Naive thymus-derived CD4-positive, alpha-beta T cell (primary cell): ENCODE measurements at regions of chr5 and their contacts with region 1.

Region 1: DNA sequence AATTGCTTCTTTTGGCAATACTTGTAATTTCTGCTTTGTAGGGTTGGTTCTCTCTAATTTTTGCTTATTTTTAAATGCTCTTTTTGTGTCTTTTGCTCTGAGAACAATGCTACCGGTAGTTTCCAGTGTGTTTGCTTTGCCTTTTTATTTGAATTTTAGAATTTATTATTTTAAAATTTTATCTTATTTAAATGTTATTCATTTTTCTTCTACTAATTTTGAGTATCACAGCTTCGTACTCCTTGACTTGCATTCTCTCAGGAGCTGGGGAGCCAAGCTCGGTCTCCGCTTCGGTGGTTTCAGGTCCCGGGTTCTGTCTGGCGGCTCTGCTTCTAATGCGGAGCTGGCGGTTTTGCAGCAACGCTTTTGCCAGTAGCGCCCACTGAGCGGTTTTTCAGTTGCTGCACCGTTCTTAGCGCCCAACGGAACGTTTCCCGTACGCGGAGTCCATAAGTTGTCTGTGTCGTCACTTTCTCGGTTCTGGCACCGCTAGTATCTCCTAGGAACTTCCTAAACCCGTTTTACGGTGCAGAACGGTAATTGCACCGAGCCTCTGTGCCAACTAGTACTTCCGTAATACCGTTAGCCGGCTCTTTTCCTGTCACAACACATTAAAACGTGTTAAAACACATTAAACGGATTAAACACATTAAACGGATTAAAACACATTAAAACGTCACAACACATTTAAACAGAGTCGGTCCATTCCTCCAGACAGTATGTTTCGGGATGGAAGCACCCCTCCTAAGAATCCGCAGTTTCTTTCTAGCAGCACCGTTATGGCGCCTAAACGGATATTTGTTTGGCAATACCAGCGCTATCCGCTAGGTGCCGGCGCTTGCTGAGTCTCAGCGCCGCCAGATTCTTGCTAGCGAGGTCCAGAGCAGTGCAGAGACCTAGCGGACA is 45.6 kb downstream of the ANXA2R start:
- DNase-seq: peak; percentile 73 to 89 (median 85)
- ATAC-seq: peak; percentile 73
- H3K4me3 ChIP-seq: peak overlapping the region; percentile 84
- H3K4me3 Mint-ChIP-seq: peak overlapping the region; percentile 84 to 100 (median 98)
- H3K27ac ChIP-seq: peak overlapping the region; percentile 89
- H3K27ac Mint-ChIP-seq: peak overlapping the region; percentile 97 to 100 (median 100)
- H3K4me1 ChIP-seq: peaks cover 18 to 21% of the 10 kb centered on the region in 2 donors
- H3K4me1 Mint-ChIP-seq: peaks cover 16 to 49% (median 29%) of the 10 kb centered on the region in 7 donors
- H3K27me3 ChIP-seq: no peaks in the 10 kb centered on the region
- H3K27me3 Mint-ChIP-seq: peaks cover 0 to under 1% (median 0%) of the 10 kb centered on the region in 5 donors

Region 2: DNA sequence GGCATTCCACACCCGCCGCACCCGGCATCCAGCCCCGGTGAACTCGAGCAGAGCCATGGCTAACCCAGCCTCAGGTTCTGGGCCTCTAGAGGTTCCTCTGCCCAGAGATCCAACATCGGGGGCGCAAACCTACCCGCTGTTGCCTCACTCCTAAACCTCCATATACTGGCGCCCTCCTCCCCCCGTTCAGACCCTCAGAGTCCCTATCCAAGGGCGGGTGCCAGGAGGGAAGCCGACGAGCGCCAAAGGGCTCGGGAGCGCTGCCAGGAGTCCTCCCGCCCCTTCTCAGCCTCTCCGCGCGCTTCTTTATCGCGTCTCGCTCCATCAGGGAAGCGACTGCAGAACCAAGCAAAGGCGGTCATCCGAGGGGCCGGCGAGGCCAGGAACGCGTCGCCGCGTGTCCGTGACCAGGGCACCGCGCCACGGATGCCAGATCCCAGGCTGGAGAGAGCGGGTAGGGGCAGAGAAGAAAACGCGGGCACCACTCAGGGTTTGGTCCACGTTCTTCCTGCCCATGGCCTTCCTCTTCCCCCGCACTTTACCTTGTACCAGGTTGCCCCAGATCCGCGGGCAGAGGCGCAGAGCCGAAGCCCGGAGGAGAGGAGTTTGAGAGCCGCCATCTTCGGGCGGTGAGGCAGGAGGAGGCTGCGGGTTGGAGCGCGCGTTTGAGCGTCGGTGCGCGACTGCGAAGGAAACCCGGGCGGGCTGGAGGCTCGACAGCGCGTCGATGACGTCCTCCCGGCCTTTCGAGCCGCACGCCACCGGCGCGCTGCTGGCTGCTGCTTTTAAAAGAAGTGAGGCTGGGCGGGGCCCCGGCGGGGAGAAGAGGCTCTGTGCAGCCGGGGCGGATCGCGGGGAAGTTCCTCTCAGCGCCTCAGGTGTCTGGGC is 1124.5 kb before region 1 on chr5 and contains the start of gene OXCT1:
- CTCF ChIA-PET with region 1: no interaction called
- POLR2A ChIA-PET with region 1: no interaction called
- intact Hi-C with region 1: no loop called
- DNase-seq: peak; percentile 88 to 96 (median 95)
- ATAC-seq: peak; percentile 97
- H3K4me3 ChIP-seq: peak within 1 kb of the TSS; percentile 91
- H3K4me3 Mint-ChIP-seq: peak within 1 kb of the TSS; percentile 85 to 94 (median 90)
- H3K27ac ChIP-seq: peak within 1 kb of the TSS; percentile 97
- H3K27ac Mint-ChIP-seq: peak within 1 kb of the TSS; percentile 89 to 98 (median 97)
- H3K4me1 ChIP-seq: peaks cover 16% of the 10 kb centered on the region in 2 donors
- H3K4me1 Mint-ChIP-seq: peaks cover 18 to 63% (median 57%) of the 10 kb centered on the region in 7 donors
- H3K27me3 ChIP-seq: no peaks in the 10 kb centered on the region
- H3K27me3 Mint-ChIP-seq: no peaks in the 10 kb centered on the region
- total RNA-seq, gene OXCT1: 18.6 to 53.1 (median 30.0) TPM

Region 3: GRCh38 chr5:42321785-42322184 is 672.7 kb before region 1 on chr5:
- CTCF ChIA-PET with region 1: no interaction called
- POLR2A ChIA-PET with region 1: no interaction called
- intact Hi-C with region 1: no loop called
- DNase-seq: no peak
- ATAC-seq: no peak
- H3K4me3 ChIP-seq: no peak overlapping the region
- H3K4me3 Mint-ChIP-seq: no peak overlapping the region
- H3K27ac ChIP-seq: no peak overlapping the region
- H3K27ac Mint-ChIP-seq: no peak overlapping the region
- H3K4me1 ChIP-seq: no peaks in the 10 kb centered on the region
- H3K4me1 Mint-ChIP-seq: no peaks in the 10 kb centered on the region
- H3K27me3 ChIP-seq: no peaks in the 10 kb centered on the region
- H3K27me3 Mint-ChIP-seq: peaks cover 0 to 10% (median 0%) of the 10 kb centered on the region in 5 donors

Region 4: DNA sequence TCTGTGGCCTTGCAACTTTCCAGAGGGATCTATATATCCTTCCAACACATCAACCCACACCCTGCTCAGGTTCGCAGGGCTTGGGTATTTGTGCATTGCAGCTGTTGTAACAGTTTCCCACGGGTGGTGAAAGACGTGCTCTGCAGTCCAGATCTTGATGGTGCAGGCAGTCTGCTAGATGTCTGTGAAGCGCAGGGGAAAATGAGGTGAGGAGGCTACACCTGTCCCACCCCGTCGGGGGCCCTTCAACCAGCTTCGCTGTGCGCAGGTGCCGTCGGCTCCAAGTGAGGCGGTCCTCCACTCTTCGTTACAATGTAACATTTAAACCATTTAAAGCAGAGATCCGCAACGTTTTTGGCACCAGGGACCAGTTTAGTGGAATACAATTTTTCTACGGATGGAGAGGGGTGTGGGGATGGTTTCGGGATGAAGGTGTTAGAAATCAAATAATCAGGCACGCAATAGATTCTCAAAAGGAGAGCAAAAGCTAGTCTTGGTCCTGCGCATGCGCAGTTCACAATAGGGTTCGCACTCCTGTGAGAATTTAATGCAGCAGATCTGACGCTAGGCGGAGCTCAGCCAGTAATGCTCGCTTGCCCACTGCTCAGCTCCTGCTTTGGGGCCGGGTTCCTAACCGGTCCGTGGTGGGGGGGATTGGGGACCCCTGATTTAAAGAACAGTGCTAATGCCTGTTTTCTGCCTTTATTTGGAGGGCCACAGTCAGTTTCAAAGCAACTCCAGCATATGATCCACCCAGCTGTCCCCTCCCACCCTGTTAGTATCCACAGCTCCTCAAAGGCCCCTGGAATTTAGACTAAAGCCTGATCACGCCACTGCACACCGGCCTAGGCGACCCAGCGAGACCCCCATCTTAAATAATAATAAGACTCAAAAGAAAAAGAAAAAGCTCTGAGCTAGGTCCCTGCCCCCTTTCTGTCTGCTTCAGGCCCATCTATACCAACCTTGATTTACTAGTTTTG is 85.7 kb before region 1 on chr5:
- CTCF ChIA-PET with region 1: interaction called, 16 read pairs
- POLR2A ChIA-PET with region 1: interaction called, 184 read pairs
- intact Hi-C with region 1: loop called (anchors 1 kb)
- DNase-seq: peak; percentile 76 to 93 (median 88)
- ATAC-seq: peak; percentile 92
- H3K4me3 ChIP-seq: peak overlapping the region; percentile 72
- H3K4me3 Mint-ChIP-seq: peak overlapping the region; percentile 89 to 98 (median 94)
- H3K27ac ChIP-seq: peak overlapping the region; percentile 76
- H3K27ac Mint-ChIP-seq: peak overlapping the region; percentile 64 to 97 (median 95)
- H3K4me1 ChIP-seq: peaks cover 0 to 4% of the 10 kb centered on the region in 2 donors
- H3K4me1 Mint-ChIP-seq: peaks cover 5 to 22% (median 19%) of the 10 kb centered on the region in 7 donors
- H3K27me3 ChIP-seq: no peaks in the 10 kb centered on the region
- H3K27me3 Mint-ChIP-seq: peaks cover 0 to 43% (median 0%) of the 10 kb centered on the region in 5 donors

Region 5: GRCh38 chr5:42982107-42982622 is 12.3 kb before region 1 on chr5:
- CTCF ChIA-PET with region 1: interaction called, 4 read pairs
- POLR2A ChIA-PET with region 1: interaction called, 19 read pairs
- intact Hi-C with region 1: loop called in 1 of 2 experiments (anchors 1 kb)
- DNase-seq: no peak
- ATAC-seq: no peak
- H3K4me3 ChIP-seq: no peak overlapping the region
- H3K4me3 Mint-ChIP-seq: no peak overlapping the region
- H3K27ac ChIP-seq: no peak overlapping the region
- H3K27ac Mint-ChIP-seq: no peak overlapping the region
- H3K4me1 ChIP-seq: peaks cover 2 to 13% of the 10 kb centered on the region in 2 donors
- H3K4me1 Mint-ChIP-seq: peaks cover 11 to 43% (median 36%) of the 10 kb centered on the region in 7 donors
- H3K27me3 ChIP-seq: no peaks in the 10 kb centered on the region
- H3K27me3 Mint-ChIP-seq: no peaks in the 10 kb centered on the region

Region 6: DNA sequence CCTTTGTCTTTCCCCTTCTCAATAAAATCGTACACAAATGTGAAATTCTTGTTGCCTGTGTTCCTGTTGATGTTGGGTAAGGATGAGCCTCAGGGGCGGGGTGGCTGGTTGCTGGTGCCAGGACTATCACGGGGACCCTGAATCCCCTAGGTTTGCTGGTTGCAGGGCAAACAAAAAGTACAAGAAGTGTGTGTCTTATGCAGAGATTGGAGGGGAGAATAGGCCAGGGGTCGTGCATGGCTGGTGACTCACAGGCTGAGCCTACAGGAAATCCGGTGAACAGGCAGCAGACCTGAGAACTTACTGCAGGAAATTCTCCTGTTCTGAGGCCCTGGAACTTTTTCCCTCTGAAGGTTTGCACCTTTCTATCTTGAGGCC is 40.1 kb after region 1 on chr5:
- CTCF ChIA-PET with region 1: interaction called, 23 read pairs
- POLR2A ChIA-PET with region 1: interaction called, 723 read pairs
- intact Hi-C with region 1: no loop called
- DNase-seq: peak in 1 of 9 donors; percentile 30
- ATAC-seq: no peak
- H3K4me3 ChIP-seq: no peak overlapping the region
- H3K4me3 Mint-ChIP-seq: peak overlapping the region in 8 of 10 donors; percentile 5 to 59 (median 20)
- H3K27ac ChIP-seq: no peak overlapping the region
- H3K27ac Mint-ChIP-seq: peak overlapping the region in 8 of 9 donors; percentile 8 to 100 (median 49)
- H3K4me1 ChIP-seq: peaks cover 16 to 17% of the 10 kb centered on the region in 2 donors
- H3K4me1 Mint-ChIP-seq: peaks cover 18 to 69% (median 59%) of the 10 kb centered on the region in 7 donors
- H3K27me3 ChIP-seq: no peaks in the 10 kb centered on the region
- H3K27me3 Mint-ChIP-seq: no peaks in the 10 kb centered on the region

Region 7: GRCh38 chr5:43066799-43067741 is 72.6 kb after region 1 on chr5:
- CTCF ChIA-PET with region 1: interaction called, 28 read pairs
- POLR2A ChIA-PET with region 1: interaction called, 345 read pairs
- intact Hi-C with region 1: loop called (anchors 1 kb)
- DNase-seq: peak; percentile 80 to 96 (median 89)
- ATAC-seq: peak; percentile 69
- H3K4me3 ChIP-seq: peak overlapping the region; percentile 82
- H3K4me3 Mint-ChIP-seq: peak overlapping the region; percentile 93 to 100 (median 98)
- H3K27ac ChIP-seq: peak overlapping the region; percentile 90
- H3K27ac Mint-ChIP-seq: peak overlapping the region; percentile 99 to 100 (median 99)
- H3K4me1 ChIP-seq: peaks cover 25 to 33% of the 10 kb centered on the region in 2 donors
- H3K4me1 Mint-ChIP-seq: peaks cover 26 to 67% (median 44%) of the 10 kb centered on the region in 7 donors
- H3K27me3 ChIP-seq: no peaks in the 10 kb centered on the region
- H3K27me3 Mint-ChIP-seq: no peaks in the 10 kb centered on the region

Region 8: GRCh38 chr5:43191740-43192557 is 197.4 kb after region 1 on chr5 and contains the start of gene NIM1K:
- CTCF ChIA-PET with region 1: no interaction called
- POLR2A ChIA-PET with region 1: no interaction called
- intact Hi-C with region 1: loop called in 1 of 2 experiments (anchors 1 kb)
- DNase-seq: peak in 8 of 9 donors; percentile 7 to 55 (median 16)
- ATAC-seq: peak; percentile 51
- H3K4me3 ChIP-seq: peak within 1 kb of the TSS; percentile 63
- H3K4me3 Mint-ChIP-seq: peak within 1 kb of the TSS; percentile 81 to 94 (median 88)
- H3K27ac ChIP-seq: no peak within 1 kb of the TSS
- H3K27ac Mint-ChIP-seq: peak within 1 kb of the TSS in 6 of 9 donors; percentile 21 to 86 (median 71)
- H3K4me1 ChIP-seq: peaks cover 4 to 18% of the 10 kb centered on the region in 2 donors
- H3K4me1 Mint-ChIP-seq: peaks cover 11 to 33% (median 23%) of the 10 kb centered on the region in 7 donors
- H3K27me3 ChIP-seq: peaks cover 0 to 5% of the 10 kb centered on the region in 2 donors
- H3K27me3 Mint-ChIP-seq: peaks cover 15 to 22% (median 19%) of the 10 kb centered on the region in 5 donors
- total RNA-seq, gene NIM1K: 0.40 to 0.97 (median 0.61) TPM

Region 9: GRCh38 chr5:43602461-43603343 is 608.2 kb after region 1 on chr5 and contains the start of gene NNT:
- CTCF ChIA-PET with region 1: no interaction called
- POLR2A ChIA-PET with region 1: no interaction called
- intact Hi-C with region 1: loop called (anchors 2 to 5 kb)
- DNase-seq: peak; percentile 71 to 85 (median 78)
- ATAC-seq: peak; percentile 85
- H3K4me3 ChIP-seq: peak within 1 kb of the TSS; percentile 78
- H3K4me3 Mint-ChIP-seq: peak within 1 kb of the TSS; percentile 90 to 99 (median 94)
- H3K27ac ChIP-seq: peak within 1 kb of the TSS; percentile 87
- H3K27ac Mint-ChIP-seq: peak within 1 kb of the TSS; percentile 86 to 98 (median 93)
- H3K4me1 ChIP-seq: peaks cover 6 to 14% of the 10 kb centered on the region in 2 donors
- H3K4me1 Mint-ChIP-seq: peaks cover 26 to 72% (median 60%) of the 10 kb centered on the region in 7 donors
- H3K27me3 ChIP-seq: no peaks in the 10 kb centered on the region
- H3K27me3 Mint-ChIP-seq: no peaks in the 10 kb centered on the region
- total RNA-seq, gene NNT: 42.5 to 73.5 (median 60.7) TPM